Activated T-helper 1 cell treated with anti-CD3 and anti-CD28 coated beads, Interleukin-12 subunit alpha, Interleukin-12 subunit beta, Interleukin-2, Interleukin-4 antibody, amounts not matched to agents 30 ng/mL and 10 ng/mL and 1 ng/mL, durations not matched to agents 14 hours and 24 hours and 36 hours (primary cell): ENCODE measurements at regions of chr4 and their contacts with region 1.

Region 1: GRCh38 chr4:112119353-112119783 is 25.9 kb upstream of the FAM241A start:
- DNase-seq: peak; percentile 21
- H3K4me3 Mint-ChIP-seq: peak overlapping the region; percentile 50
- H3K27ac Mint-ChIP-seq: peak overlapping the region; percentile 94
- H3K4me1 Mint-ChIP-seq: peaks cover 24% of the 10 kb centered on the region
- H3K27me3 Mint-ChIP-seq: no peaks in the 10 kb centered on the region

Region 2: DNA sequence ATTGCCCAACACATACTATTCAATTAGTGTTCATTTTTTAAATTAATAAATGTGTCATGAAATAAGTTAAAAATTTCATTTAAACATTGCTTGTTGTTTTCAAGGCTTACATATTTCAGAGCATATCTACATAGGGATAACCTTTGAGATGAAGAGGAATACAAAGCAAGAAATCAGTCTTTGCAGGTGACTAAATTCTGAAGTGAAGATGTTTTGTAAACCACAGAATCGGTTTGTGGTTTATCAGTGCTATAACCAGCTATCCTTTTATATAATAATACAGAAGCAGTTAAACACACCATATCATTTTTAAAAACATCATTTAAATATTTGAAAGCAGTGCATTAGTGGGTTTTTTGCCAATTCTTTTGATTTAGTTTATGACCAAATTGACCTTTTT is 52.8 kb after region 1 on chr4:
- intact Hi-C with region 1: loop called (anchors 1 kb)
- DNase-seq: no peak
- H3K4me3 Mint-ChIP-seq: no peak overlapping the region
- H3K27ac Mint-ChIP-seq: no peak overlapping the region
- H3K4me1 Mint-ChIP-seq: peaks cover 33% of the 10 kb centered on the region
- H3K27me3 Mint-ChIP-seq: no peaks in the 10 kb centered on the region

Region 3: GRCh38 chr4:112183252-112183651 is 63.9 kb after region 1 on chr4:
- intact Hi-C with region 1: loop called (anchors 2 kb)
- DNase-seq: no peak
- H3K4me3 Mint-ChIP-seq: peak overlapping the region; percentile 21
- H3K27ac Mint-ChIP-seq: peak overlapping the region; percentile 53
- H3K4me1 Mint-ChIP-seq: peaks cover 42% of the 10 kb centered on the region
- H3K27me3 Mint-ChIP-seq: no peaks in the 10 kb centered on the region

Region 4: DNA sequence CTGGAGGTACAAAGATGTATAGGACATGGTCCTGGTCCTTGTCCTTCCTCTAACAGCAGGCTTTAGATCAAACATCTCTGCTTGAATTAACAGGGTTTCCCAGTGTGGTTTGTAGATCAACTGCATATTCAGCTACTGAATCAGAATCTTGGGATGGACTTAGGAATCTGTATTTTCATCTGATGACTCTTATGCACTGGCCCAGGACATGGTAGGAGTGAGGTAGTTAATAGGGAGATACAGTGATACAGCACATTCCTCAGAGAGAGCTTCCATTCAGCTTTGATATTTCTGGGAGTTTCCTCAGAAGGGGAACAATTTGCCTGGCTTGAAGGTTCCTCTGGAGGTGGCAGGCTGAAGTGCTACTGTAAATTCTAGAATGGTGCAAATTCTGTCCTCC is 720.7 kb after region 1 on chr4:
- intact Hi-C with region 1: no loop called
- DNase-seq: no peak
- H3K4me3 Mint-ChIP-seq: no peak overlapping the region
- H3K27ac Mint-ChIP-seq: no peak overlapping the region
- H3K4me1 Mint-ChIP-seq: no peaks in the 10 kb centered on the region
- H3K27me3 Mint-ChIP-seq: peaks cover 7% of the 10 kb centered on the region